Motor neuron (in vitro differentiated cells): ENCODE measurements at regions of chr9 and their contacts with region 1.

Region 1: DNA sequence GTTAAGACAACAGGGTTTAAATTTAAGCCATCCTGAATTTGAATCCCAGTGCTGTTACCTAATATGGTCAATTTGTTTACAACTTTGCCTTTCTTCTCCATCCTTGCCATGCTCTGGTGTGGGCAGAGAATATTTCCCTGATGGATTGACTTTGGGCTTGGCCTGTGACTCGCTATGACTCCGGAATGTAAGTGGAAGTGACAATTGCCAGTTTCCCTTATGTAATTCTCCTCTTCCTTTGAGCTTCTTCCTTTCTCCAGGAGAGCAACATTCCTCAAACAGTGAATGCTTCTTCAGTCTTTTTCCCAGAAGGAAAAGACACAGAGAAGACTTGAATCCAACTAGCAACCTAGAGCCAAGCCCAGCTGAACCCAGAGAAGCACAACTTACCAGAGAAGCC is 159.1 kb downstream of the LURAP1L start:
- ATAC-seq: no peak
- H3K4me3 ChIP-seq: no peak overlapping the region
- H3K27ac ChIP-seq: no peak overlapping the region
- H3K4me1 ChIP-seq: no peaks in the 10 kb centered on the region

Region 2: DNA sequence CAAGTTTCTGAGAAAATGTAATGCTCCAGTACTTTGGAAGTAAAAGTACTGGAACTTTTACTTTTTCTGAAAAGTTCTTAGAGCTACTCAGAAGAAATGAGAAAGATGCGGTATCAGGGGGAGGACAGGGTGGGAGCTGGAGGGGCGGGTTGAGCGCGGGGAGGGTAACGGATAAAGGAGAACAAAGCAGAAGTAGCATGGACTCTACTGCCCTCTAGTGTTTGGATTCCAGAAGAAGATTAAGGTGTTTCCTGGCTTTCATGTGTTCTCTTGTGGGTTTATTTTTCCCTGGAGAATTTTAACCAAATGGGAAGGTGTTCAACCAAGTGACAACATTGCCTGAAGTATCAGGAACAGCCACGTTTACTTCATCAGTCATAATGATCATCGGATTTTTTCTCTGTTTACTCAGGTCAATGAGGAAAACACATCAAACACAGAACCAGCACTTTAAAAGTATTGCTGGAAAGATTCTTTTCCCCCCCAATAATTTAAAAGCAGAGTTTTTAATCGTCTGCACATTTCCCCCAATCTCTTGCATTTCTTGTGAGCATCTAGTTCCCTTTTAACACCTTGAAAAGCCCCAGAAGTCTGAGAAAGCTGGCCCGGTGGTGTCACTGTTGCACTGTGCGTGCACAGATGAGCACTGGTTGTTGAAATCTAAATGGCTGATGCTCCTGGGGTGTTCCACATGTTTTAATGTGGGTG is 154.9 kb after region 1 on chr9:
- in situ Hi-C with region 1: loop called in 1 of 9 experiments (anchors 25 kb)
- ATAC-seq: peak; percentile 50 to 93 (median 82)
- H3K4me3 ChIP-seq: no peak overlapping the region
- H3K27ac ChIP-seq: no peak overlapping the region
- H3K4me1 ChIP-seq: no peaks in the 10 kb centered on the region